ENCODE measurements at regions of chr5 and their contacts with region 1.

Region 1: DNA sequence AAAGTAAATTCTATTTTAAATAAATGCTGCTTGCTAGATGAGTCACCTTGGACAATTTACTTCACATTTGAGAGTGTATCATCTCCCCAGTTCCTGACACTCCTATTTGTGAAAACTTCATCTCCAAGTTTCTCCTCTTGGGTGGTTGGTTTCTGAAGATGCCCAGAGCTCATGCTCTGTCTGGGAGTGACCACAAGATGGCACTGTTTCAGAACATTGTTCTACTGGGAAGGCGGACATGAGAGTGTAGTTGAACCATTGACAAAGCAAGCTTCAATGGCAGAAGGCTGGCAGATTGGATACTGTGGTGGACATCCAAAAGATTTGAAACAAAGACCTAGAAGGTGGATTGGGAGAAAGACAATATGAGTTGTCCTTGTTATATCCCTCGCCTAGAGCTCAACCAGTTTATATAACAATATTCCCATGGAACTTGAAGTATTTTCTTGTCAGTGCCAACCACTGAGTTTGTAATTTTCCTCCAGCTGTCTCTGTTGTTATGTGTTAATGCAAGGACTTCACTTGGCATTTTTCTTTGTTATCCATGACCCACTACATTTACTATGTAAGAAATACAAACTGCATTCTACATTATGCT is 234.3 kb upstream of the ANKH start:
- DNase-seq: peak; percentile 67
- H3K4me3 ChIP-seq: no peak overlapping the region
- H3K27ac ChIP-seq: no peak overlapping the region
- H3K4me1 ChIP-seq: no peaks in the 10 kb centered on the region
- H3K27me3 ChIP-seq: no peaks in the 10 kb centered on the region
- CTCF ChIP-seq: peak; percentile 82
- EP300 ChIP-seq: no peak
- RAD21 ChIP-seq: peak; percentile 82

Region 2: DNA sequence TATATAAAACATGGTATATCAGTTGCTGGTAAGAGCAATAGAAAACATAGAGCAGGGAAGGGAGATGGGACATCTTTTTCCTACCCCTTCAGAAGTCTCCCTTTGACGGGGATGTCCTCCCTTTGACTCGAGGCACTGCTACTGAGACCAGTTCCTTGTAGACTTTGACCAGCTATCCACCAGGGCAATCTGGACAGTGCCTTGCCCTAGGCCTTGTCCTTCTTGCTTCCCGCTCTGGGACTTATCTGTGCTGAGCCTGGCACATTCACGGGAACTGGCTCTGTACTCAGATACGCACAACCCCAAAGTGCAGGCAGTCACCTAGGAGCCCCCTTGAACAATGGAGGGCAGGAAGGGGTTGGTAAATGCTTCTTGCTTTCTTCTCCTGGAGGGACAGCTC is 117.7 kb before region 1 on chr5:
- CTCF ChIA-PET with region 1: no interaction called
- POLR2A ChIA-PET with region 1: no interaction called
- DNase-seq: no peak
- H3K4me3 ChIP-seq: no peak overlapping the region
- H3K27ac ChIP-seq: no peak overlapping the region
- H3K4me1 ChIP-seq: no peaks in the 10 kb centered on the region
- H3K27me3 ChIP-seq: no peaks in the 10 kb centered on the region
- CTCF ChIP-seq: no peak
- EP300 ChIP-seq: no peak
- RAD21 ChIP-seq: no peak

Region 3: DNA sequence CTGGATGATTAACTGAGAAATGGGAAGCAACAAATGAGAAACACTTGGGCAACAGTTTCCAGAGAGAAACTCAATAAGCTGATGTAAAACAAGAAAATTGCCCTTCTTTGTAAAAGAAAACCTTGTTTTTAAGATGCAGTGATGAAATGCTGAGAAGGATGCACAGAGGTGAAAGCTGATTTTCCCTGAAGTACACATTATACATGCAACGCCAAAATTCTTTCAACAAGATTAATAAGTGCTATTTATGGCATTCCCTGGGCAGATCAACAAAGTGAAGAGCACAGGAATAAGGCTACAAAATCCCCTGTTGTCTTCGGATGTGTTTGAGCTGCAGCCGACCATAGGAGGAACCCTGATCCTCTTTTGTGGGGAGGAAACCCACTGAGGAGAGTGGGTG is 26.3 kb before region 1 on chr5:
- CTCF ChIA-PET with region 1: interaction called, 10 read pairs
- POLR2A ChIA-PET with region 1: no interaction called
- DNase-seq: no peak
- H3K4me3 ChIP-seq: no peak overlapping the region
- H3K27ac ChIP-seq: no peak overlapping the region
- H3K4me1 ChIP-seq: no peaks in the 10 kb centered on the region
- H3K27me3 ChIP-seq: no peaks in the 10 kb centered on the region
- CTCF ChIP-seq: no peak
- EP300 ChIP-seq: no peak
- RAD21 ChIP-seq: no peak

Region 4: GRCh38 chr5:15124871-15125568 is 19.1 kb after region 1 on chr5:
- CTCF ChIA-PET with region 1: interaction called, 15 read pairs
- POLR2A ChIA-PET with region 1: no interaction called
- DNase-seq: no peak
- H3K4me3 ChIP-seq: no peak overlapping the region
- H3K27ac ChIP-seq: no peak overlapping the region
- H3K4me1 ChIP-seq: no peaks in the 10 kb centered on the region
- H3K27me3 ChIP-seq: no peaks in the 10 kb centered on the region
- CTCF ChIP-seq: no peak
- EP300 ChIP-seq: no peak
- RAD21 ChIP-seq: no peak

Region 5: GRCh38 chr5:15191012-15191411 is 85.1 kb after region 1 on chr5:
- CTCF ChIA-PET with region 1: interaction called, 12 read pairs
- POLR2A ChIA-PET with region 1: no interaction called
- DNase-seq: no peak
- H3K4me3 ChIP-seq: no peak overlapping the region
- H3K27ac ChIP-seq: no peak overlapping the region
- H3K4me1 ChIP-seq: no peaks in the 10 kb centered on the region
- H3K27me3 ChIP-seq: 0 out of 2 replicates have a peak, but pooled peaks cover 5% of the 10 kb centered on the region
- CTCF ChIP-seq: peak; percentile 43
- EP300 ChIP-seq: no peak
- RAD21 ChIP-seq: peak; percentile 27; the same call in 1 of the 2 replicates

Region 6: GRCh38 chr5:15566306-15566705 is 460.4 kb after region 1 on chr5:
- CTCF ChIA-PET with region 1: no interaction called
- POLR2A ChIA-PET with region 1: no interaction called
- DNase-seq: no peak
- H3K4me3 ChIP-seq: no peak overlapping the region
- H3K27ac ChIP-seq: no peak overlapping the region
- H3K4me1 ChIP-seq: peaks cover 0 to 4% of the 10 kb centered on the region in 2 experiments; a peak in 1 of 4 replicates
- H3K27me3 ChIP-seq: no peaks in the 10 kb centered on the region
- CTCF ChIP-seq: no peak
- EP300 ChIP-seq: no peak
- RAD21 ChIP-seq: no peak

Region 7: DNA sequence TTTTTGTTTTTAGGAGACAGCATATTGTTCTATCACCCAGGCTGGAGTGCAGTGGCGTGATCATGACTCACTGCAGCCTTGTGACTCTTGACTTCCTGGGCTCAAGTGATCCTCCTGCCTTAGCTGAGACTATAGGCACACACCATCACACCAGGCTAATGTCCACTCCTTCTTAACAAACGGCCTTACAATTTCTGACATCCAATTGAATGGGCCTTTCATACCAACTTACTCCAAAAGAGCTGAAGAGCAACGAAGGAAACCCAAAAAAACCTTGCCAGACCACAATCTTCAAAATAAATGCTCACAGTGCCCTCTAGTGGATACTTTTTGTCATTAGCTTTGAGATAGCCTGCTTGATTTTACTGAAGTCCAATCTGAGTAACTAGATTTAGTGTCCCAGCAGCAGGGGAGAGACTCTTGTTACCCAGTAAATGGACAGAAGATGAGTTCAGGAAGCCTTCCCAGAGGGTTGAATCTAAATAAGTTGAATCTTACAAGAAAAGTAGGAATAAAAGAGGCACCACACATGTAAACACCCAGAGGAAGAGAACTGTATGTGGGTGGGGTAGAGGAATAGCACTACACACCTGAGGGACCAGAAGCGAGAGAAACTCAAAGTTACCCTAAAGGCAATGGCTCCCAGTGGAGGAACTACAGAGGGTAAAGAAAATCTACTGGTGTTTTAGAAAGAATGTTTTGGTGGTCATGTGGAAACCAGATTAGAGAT is 1350.4 kb after region 1 on chr5:
- CTCF ChIA-PET with region 1: interaction called, 11 read pairs
- POLR2A ChIA-PET with region 1: no interaction called
- DNase-seq: peak; percentile 43
- H3K4me3 ChIP-seq: no peak overlapping the region
- H3K27ac ChIP-seq: peak overlapping the region in 1 of 2 experiments; percentile 37; a peak in 3 of 4 replicates
- H3K4me1 ChIP-seq: peaks cover 0 to 6% of the 10 kb centered on the region in 2 experiments; a peak in 2 of 4 replicates
- H3K27me3 ChIP-seq: no peaks in the 10 kb centered on the region
- CTCF ChIP-seq: peak; percentile 84
- EP300 ChIP-seq: no peak
- RAD21 ChIP-seq: peak; percentile 83